T-cell (primary cell): ENCODE measurements at regions of chr4 and their contacts with region 1.

Region 1: GRCh38 chr4:26288355-26288909 is 32.4 kb upstream of the RBPJ start:
- DNase-seq: peak in 3 of 35 experiments; percentile 5 to 7 (median 6)
- ATAC-seq: no peak
- H3K4me3 ChIP-seq: no peak overlapping the region
- H3K4me3 Mint-ChIP-seq: no peak overlapping the region
- H3K27ac ChIP-seq: no peak overlapping the region
- H3K27ac Mint-ChIP-seq: no peak overlapping the region
- H3K4me1 ChIP-seq: no peaks in the 10 kb centered on the region
- H3K4me1 Mint-ChIP-seq: peaks cover 0 to 10% (median 0%) of the 10 kb centered on the region in 3 donors
- H3K27me3 ChIP-seq: peaks cover 0 to 3% of the 10 kb centered on the region in 2 experiments
- H3K27me3 Mint-ChIP-seq: no peaks in the 10 kb centered on the region

Region 2: GRCh38 chr4:26185436-26185835 is 103.0 kb before region 1 on chr4:
- CTCF ChIA-PET with region 1: no interaction called
- POLR2A ChIA-PET with region 1: interaction called in 1 of 2 experiments, 10 read pairs
- DNase-seq: no peak
- ATAC-seq: no peak
- H3K4me3 ChIP-seq: no peak overlapping the region
- H3K4me3 Mint-ChIP-seq: no peak overlapping the region
- H3K27ac ChIP-seq: no peak overlapping the region
- H3K27ac Mint-ChIP-seq: no peak overlapping the region
- H3K4me1 ChIP-seq: no peaks in the 10 kb centered on the region
- H3K4me1 Mint-ChIP-seq: no peaks in the 10 kb centered on the region
- H3K27me3 ChIP-seq: no peaks in the 10 kb centered on the region
- H3K27me3 Mint-ChIP-seq: no peaks in the 10 kb centered on the region